PC-9 (cell line): ENCODE measurements at regions of chr12 and their contacts with region 1.

Region 1: DNA sequence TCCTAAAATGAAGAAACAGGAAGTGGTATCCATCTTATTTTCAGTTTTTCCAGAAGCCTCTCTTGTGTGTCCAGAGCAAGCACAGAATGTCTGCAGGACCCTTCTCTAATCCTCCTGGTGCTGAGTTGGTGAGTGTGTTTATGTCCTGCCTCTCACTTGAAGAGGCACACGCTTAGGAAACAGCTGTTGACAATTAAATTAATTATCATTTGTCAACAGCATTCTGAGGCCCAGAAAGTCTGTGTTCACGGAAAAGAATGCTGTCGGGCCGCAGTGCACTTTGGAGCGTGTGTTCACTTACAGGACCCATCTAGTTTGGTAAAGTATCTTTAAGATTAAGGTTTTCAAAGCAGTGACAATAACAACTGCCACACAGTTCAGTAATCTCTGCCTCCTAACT is 70.5 kb downstream of the LMNTD1 start:
- DNase-seq: no peak
- H3K4me3 ChIP-seq: no peak overlapping the region
- H3K27ac ChIP-seq: no peak overlapping the region
- H3K4me1 ChIP-seq: no peaks in the 10 kb centered on the region
- H3K27me3 ChIP-seq: no peaks in the 10 kb centered on the region
- CTCF ChIP-seq: no peak

Region 2: GRCh38 chr12:25789541-25789944 is 306.9 kb after region 1 on chr12:
- CTCF ChIA-PET with region 1: no interaction called
- POLR2A ChIA-PET with region 1: interaction called, 12 read pairs
- intact Hi-C with region 1: no loop called
- DNase-seq: no peak
- H3K4me3 ChIP-seq: no peak overlapping the region
- H3K27ac ChIP-seq: no peak overlapping the region
- H3K4me1 ChIP-seq: no peaks in the 10 kb centered on the region; the same call in 1 of the 2 replicates
- H3K27me3 ChIP-seq: no peaks in the 10 kb centered on the region
- CTCF ChIP-seq: no peak